ENCODE measurements at regions of chr3 and their contacts with region 1.

Region 1: DNA sequence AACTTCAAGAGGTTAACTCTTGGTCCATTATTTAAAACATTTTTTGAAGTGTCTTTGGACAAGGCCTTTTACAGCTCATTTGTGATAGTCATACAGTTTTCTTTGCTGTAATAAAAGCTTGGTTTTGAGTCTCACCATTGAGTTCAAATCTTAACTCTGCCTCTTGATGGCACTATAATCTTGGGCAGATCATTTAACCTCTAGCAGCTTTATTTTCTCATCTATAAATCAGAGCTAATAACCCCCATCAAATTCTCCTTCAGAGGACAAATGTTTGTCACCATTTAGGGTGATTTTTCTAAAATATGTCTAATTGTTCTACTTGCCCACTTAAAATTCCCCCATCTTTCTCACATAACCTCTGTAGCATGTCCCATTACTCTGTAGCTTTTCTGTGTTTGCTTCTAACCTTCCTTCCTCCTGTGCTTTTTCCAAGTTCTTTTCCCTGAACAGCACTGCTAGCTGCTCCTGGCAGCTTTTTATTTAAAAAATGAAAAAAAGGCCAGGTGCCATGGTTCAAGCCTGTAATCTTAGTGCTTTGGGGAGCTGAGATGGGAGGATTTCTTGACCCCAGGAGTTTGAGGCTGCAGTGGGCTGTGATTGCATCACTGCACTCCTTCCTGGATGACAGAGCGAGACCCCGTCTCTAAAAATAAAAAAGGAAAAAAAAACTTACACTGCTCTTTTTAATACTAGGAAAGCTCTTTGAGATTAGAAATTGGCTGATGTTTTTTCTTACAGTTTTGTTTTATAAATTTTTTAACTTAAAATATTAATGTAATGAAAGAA is 28.5 kb downstream of the UBE2E1 start:
- DNase-seq: no peak
- ATAC-seq: no peak
- H3K4me3 ChIP-seq: no peak overlapping the region
- H3K27ac ChIP-seq: no peak overlapping the region
- H3K4me1 ChIP-seq: peaks cover 0 to 3% of the 10 kb centered on the region in 2 experiments; a peak in 2 of 5 replicates
- H3K27me3 ChIP-seq: no peaks in the 10 kb centered on the region
- CTCF ChIP-seq: peak in 2 of 3 experiments; percentile 13 to 33; a peak in 2 of 6 replicates
- EP300 ChIP-seq: no peak
- POLR2A ChIP-seq: no peak
- RAD21 ChIP-seq: peak; percentile 31 to 44; a peak in 3 of 4 replicates

Region 2: DNA sequence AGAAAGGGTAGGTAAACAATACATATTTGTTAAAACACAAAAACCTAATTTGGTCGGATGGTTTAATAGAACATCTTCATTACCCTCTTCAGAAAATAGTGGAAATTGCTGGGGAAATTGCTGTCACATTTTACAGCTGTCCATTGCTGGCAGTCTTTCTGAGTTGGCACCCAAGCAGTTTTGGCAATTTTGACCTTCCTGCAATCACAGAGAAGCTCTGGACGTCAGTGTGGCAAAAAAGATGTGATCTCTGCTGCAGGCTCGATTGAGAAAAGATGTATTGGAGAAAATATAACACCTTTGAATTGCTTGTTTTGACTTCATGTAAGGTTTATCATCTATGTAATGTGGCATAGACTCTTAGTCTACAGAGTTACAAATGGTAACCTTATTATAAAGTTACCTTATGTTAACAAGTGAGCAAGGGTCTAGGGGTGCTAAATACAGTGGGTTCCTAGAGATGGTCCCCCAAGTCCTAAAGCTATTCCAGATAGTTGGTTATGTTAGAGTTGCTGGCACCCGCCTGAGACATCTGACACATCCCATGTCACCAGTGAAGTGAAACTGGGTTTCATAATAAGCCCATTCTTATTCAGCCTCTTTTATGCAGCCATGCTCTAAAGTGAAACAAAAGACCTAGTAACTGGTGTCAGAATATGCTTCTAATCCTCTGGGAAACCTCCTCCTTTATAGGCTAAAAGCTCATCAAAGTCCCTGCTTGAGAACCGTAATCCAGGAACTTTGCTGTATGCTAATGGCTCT is 14.5 kb before region 1 on chr3:
- CTCF ChIA-PET with region 1: no interaction called
- POLR2A ChIA-PET with region 1: interaction called, 41 read pairs
- in situ Hi-C with region 1: no loop called
- intact Hi-C with region 1: no loop called
- DNase-seq: no peak
- ATAC-seq: no peak
- H3K4me3 ChIP-seq: no peak overlapping the region
- H3K27ac ChIP-seq: no peak overlapping the region
- H3K4me1 ChIP-seq: peaks cover 8 to 28% of the 10 kb centered on the region in 2 experiments
- H3K27me3 ChIP-seq: no peaks in the 10 kb centered on the region
- CTCF ChIP-seq: no peak
- EP300 ChIP-seq: no peak
- POLR2A ChIP-seq: no peak
- RAD21 ChIP-seq: no peak

Region 3: DNA sequence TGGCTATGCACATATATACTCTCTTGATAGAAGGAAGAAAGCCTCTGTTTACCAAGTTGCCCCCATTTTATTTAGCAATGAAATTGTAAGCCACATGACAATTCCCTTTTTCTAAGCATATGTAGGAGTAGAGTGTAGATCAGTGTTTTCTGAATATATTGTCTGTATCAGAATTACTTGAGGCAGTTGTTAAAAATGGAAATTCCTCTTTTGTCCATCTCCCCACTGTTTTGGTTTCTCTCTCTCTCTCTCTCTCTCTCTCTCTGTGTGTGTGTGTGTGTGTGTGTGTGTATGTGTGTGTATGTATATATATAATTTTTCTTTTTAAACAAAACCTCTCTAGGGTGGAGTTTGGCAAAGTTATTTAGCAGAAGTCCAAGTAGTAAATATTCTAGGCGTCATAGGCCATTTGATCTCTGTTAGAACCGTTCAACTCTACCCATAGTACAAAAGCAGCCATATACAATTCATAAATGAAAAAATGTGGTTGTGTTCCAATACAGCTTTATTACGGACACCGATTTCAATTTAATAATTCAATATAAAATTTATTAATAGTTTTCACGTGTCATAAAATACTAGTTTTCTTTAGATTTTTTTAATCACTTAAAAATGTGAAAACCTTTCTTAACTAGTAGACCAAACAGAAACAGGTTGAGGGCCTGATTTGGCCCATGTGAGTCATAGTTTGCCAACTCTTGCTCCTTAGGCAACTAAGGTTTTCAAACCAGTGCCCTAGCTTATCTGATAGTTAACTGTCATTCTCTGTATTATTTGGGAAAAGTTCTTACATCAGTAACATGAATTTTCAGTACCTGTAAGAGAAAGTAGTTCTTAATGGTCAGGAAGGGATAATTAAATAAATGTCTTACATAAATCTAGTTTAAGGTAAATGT is 11.3 kb after region 1 on chr3:
- CTCF ChIA-PET with region 1: interaction called, 3 read pairs
- POLR2A ChIA-PET with region 1: interaction called, 29 read pairs
- in situ Hi-C with region 1: no loop called
- intact Hi-C with region 1: no loop called
- DNase-seq: no peak
- ATAC-seq: no peak
- H3K4me3 ChIP-seq: no peak overlapping the region
- H3K27ac ChIP-seq: no peak overlapping the region
- H3K4me1 ChIP-seq: no peaks in the 10 kb centered on the region
- H3K27me3 ChIP-seq: no peaks in the 10 kb centered on the region
- CTCF ChIP-seq: no peak
- EP300 ChIP-seq: no peak
- POLR2A ChIP-seq: no peak
- RAD21 ChIP-seq: no peak

Measured in K562 (cell line).